Activated CD4-positive, alpha-beta T cell treated with anti-CD3 and anti-CD28 coated beads, Interleukin-2, amount 10 ng/mL, durations not matched to agents 24 days and 14 days (primary cell): ENCODE measurements at regions of chr2 and their contacts with region 1.

Region 1: GRCh38 chr2:134668821-134669220 is 50.0 kb downstream of the TMEM163 start:
- DNase-seq: peak; percentile 94
- H3K4me3 Mint-ChIP-seq: peak overlapping the region; percentile 61
- H3K27ac Mint-ChIP-seq: peak overlapping the region; percentile 46
- H3K4me1 Mint-ChIP-seq: peaks cover 62% of the 10 kb centered on the region
- H3K27me3 Mint-ChIP-seq: peaks cover 40% of the 10 kb centered on the region

Region 2: GRCh38 chr2:134619250-134619649 is 49.6 kb before region 1 on chr2:
- intact Hi-C with region 1: no loop called
- DNase-seq: no peak
- H3K4me3 Mint-ChIP-seq: no peak overlapping the region
- H3K27ac Mint-ChIP-seq: no peak overlapping the region
- H3K4me1 Mint-ChIP-seq: peaks cover 7% of the 10 kb centered on the region
- H3K27me3 Mint-ChIP-seq: peaks cover 5% of the 10 kb centered on the region

Region 3: GRCh38 chr2:134683561-134684112 is 14.8 kb after region 1 on chr2:
- intact Hi-C with region 1: loop called (anchors 1 kb)
- DNase-seq: peak; percentile 65
- H3K4me3 Mint-ChIP-seq: no peak overlapping the region
- H3K27ac Mint-ChIP-seq: no peak overlapping the region
- H3K4me1 Mint-ChIP-seq: peaks cover 33% of the 10 kb centered on the region
- H3K27me3 Mint-ChIP-seq: peaks cover 12% of the 10 kb centered on the region